ENCODE measurements at regions of chr2 and their contacts with region 1.

Region 1: GRCh38 chr2:153819501-153819900 is 52.2 kb upstream of the GALNT13 start:
- DNase-seq: no peak
- H3K4me3 ChIP-seq: no peak overlapping the region
- H3K27ac ChIP-seq: no peak overlapping the region
- H3K4me1 ChIP-seq: no peaks in the 10 kb centered on the region
- H3K27me3 ChIP-seq: no peaks in the 10 kb centered on the region
- CTCF ChIP-seq: peak in 2 of 3 experiments; percentile 41 to 70; a peak in 2 of 4 replicates
- EP300 ChIP-seq: no peak
- POLR2A ChIP-seq: no peak
- RAD21 ChIP-seq: peak; percentile 58 to 67

Region 2: GRCh38 chr2:153770359-153770991 is 49.0 kb before region 1 on chr2:
- CTCF ChIA-PET with region 1: interaction called, 14 read pairs
- POLR2A ChIA-PET with region 1: no interaction called
- DNase-seq: no peak
- H3K4me3 ChIP-seq: no peak overlapping the region
- H3K27ac ChIP-seq: no peak overlapping the region
- H3K4me1 ChIP-seq: no peaks in the 10 kb centered on the region
- H3K27me3 ChIP-seq: no peaks in the 10 kb centered on the region
- CTCF ChIP-seq: peak in 2 of 3 experiments; percentile 51 to 78; a peak in 3 of 4 replicates
- EP300 ChIP-seq: no peak
- POLR2A ChIP-seq: no peak
- RAD21 ChIP-seq: peak; percentile 80 to 81

Region 3: GRCh38 chr2:153787612-153788011 is 31.9 kb before region 1 on chr2:
- CTCF ChIA-PET with region 1: interaction called, 18 read pairs
- POLR2A ChIA-PET with region 1: no interaction called
- DNase-seq: no peak
- H3K4me3 ChIP-seq: no peak overlapping the region
- H3K27ac ChIP-seq: no peak overlapping the region
- H3K4me1 ChIP-seq: no peaks in the 10 kb centered on the region
- H3K27me3 ChIP-seq: no peaks in the 10 kb centered on the region
- CTCF ChIP-seq: peak in 1 of 3 experiments; percentile 17; a peak in 1 of 4 replicates
- EP300 ChIP-seq: no peak
- POLR2A ChIP-seq: no peak
- RAD21 ChIP-seq: peak; percentile 36

Region 4: GRCh38 chr2:153802671-153803070 is 16.8 kb before region 1 on chr2:
- CTCF ChIA-PET with region 1: interaction called, 11 read pairs
- POLR2A ChIA-PET with region 1: no interaction called
- DNase-seq: no peak
- H3K4me3 ChIP-seq: no peak overlapping the region
- H3K27ac ChIP-seq: no peak overlapping the region
- H3K4me1 ChIP-seq: no peaks in the 10 kb centered on the region
- H3K27me3 ChIP-seq: no peaks in the 10 kb centered on the region
- CTCF ChIP-seq: no peak
- EP300 ChIP-seq: no peak
- POLR2A ChIP-seq: no peak
- RAD21 ChIP-seq: no peak

Region 5: GRCh38 chr2:153808679-153809078 is 10.8 kb before region 1 on chr2:
- CTCF ChIA-PET with region 1: interaction called, 11 read pairs
- POLR2A ChIA-PET with region 1: interaction called, 3 read pairs
- DNase-seq: no peak
- H3K4me3 ChIP-seq: no peak overlapping the region
- H3K27ac ChIP-seq: no peak overlapping the region
- H3K4me1 ChIP-seq: peaks cover 0 to 4% (median 1%) of the 10 kb centered on the region in 4 experiments; a peak in 1 of 7 replicates
- H3K27me3 ChIP-seq: no peaks in the 10 kb centered on the region
- CTCF ChIP-seq: no peak
- EP300 ChIP-seq: no peak
- POLR2A ChIP-seq: no peak
- RAD21 ChIP-seq: no peak